ENCODE measurements at regions of chr17 and their contacts with region 1.

Region 1: DNA sequence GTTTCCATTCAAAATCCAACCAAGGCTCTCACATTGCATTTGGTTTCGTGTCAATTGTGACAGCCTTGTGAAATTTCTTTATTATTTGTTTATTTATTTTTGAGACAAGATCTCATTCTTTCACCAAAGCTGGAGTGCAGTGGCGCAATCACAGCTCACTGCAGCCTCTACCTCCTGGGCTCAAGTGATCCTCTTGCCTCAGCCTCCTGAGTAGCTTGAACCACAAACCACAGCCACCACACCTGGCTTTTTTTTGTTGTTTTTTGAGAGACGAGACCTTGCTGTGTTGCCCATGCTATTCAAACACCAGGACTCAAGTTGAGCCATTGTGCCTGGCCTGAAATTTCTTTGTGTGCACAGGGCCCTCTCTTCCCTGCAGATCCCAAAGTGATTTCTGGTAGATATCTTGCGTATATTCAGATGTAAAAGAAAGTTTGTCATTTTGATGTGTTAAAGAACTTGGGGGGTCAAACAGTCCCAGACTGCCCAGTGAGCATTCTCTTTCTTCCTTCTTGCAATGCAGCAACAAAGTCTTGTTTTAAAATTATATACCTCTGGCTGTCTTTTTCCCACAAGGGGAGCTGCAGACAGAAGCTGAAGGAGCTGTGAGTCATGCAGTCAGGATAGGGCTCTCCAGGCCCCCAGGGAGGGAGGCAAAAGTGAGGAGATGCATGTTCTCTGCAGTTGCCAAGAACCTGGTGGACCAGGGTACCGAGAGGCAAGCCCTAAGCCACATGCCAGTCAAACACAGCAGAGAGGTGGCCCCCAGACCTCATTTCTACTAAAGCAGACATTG is 15.5 kb upstream of the USP22 start:
- DNase-seq: no peak
- ATAC-seq: no peak
- H3K4me3 ChIP-seq: no peak overlapping the region
- H3K27ac ChIP-seq: no peak overlapping the region
- H3K4me1 ChIP-seq: no peaks in the 10 kb centered on the region
- H3K27me3 ChIP-seq: no peaks in the 10 kb centered on the region
- CTCF ChIP-seq: no peak

Region 2: DNA sequence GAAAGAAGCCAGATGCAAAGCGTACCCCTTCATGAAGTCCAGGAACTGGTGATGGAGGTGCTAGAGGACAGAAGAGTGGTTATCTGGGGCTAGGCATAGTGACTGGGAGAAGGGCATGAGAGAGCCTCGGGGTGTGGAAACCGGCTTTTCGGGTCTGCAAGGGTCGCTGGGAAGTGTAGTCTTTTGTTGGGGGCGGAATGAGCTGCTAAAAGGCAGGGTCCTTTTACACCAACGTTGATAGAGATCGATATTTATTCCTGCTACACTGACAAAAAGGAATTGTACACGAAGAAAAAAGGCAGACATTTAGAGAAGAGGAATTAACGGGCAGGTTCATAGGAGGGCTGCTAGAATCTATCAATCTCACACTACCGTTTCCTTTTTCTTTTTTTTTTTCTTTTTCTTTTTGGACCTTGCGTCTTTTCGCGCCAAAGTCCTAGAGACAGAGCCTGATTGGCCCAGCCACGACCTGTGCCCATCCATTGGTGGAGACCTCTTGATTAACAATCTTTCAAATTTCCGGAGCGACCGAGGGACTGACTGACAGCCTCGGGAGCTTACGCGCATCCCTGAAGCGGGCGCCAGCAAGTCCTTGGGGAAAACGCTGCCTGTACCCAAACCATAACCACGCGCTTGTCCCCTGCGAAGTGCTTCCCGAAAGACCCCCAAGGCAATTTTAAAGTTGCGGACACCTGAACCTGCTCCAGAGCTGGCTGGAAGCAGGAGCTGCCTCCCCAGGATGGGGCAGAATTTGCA is 40.8 kb after region 1 on chr17:
- intact Hi-C with region 1: loop called in 1 of 2 experiments (anchors 5 kb)
- DNase-seq: peak; percentile 34 to 73
- ATAC-seq: peak; percentile 69 to 84 (median 70)
- H3K4me3 ChIP-seq: peak overlapping the region; percentile 66
- H3K27ac ChIP-seq: no peak overlapping the region
- H3K4me1 ChIP-seq: peaks cover 18% of the 10 kb centered on the region
- H3K27me3 ChIP-seq: no peaks in the 10 kb centered on the region
- CTCF ChIP-seq: no peak